PC-9 (cell line): ENCODE measurements at regions of chr19 and their contacts with region 1.

Region 1: DNA sequence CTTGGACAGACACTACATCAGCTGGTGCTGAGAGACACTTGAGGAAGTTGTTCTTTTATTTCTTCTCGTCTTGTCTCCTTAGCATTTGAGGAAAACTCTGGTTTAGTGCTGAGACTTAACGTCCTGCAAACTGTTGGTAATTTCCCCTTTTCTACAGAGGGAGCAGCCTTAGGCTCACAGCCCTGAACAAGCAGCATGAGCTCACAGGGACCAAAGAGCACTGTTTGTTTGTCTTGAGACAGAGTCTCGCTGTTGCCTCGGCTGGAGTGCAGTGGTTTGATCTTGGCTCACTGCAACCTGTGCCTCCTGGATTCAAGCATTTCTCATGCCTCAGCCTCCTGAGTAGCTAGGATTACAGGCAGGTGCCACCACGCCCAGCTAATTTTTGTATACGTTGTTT is 5.5 kb downstream of the ZNF805 start:
- DNase-seq: peak in 1 of 2 experiments; percentile 15
- H3K4me3 ChIP-seq: no peak overlapping the region
- H3K27ac ChIP-seq: no peak overlapping the region
- H3K4me1 ChIP-seq: peaks cover 12% of the 10 kb centered on the region; the same call in 1 of the 2 replicates
- H3K27me3 ChIP-seq: no peaks in the 10 kb centered on the region
- CTCF ChIP-seq: no peak

Region 2: GRCh38 chr19:57152921-57153320 is 93.0 kb before region 1 on chr19:
- CTCF ChIA-PET with region 1: no interaction called
- POLR2A ChIA-PET with region 1: no interaction called
- intact Hi-C with region 1: no loop called
- DNase-seq: peak in 1 of 2 experiments; percentile 51
- H3K4me3 ChIP-seq: no peak overlapping the region
- H3K27ac ChIP-seq: no peak overlapping the region
- H3K4me1 ChIP-seq: no peaks in the 10 kb centered on the region
- H3K27me3 ChIP-seq: peaks cover 69% of the 10 kb centered on the region
- CTCF ChIP-seq: no peak

Region 3: GRCh38 chr19:57376151-57376550 is 130.2 kb after region 1 on chr19:
- CTCF ChIA-PET with region 1: no interaction called
- POLR2A ChIA-PET with region 1: interaction called, 42 read pairs
- intact Hi-C with region 1: no loop called
- DNase-seq: no peak
- H3K4me3 ChIP-seq: no peak overlapping the region
- H3K27ac ChIP-seq: no peak overlapping the region
- H3K4me1 ChIP-seq: no peaks in the 10 kb centered on the region
- H3K27me3 ChIP-seq: no peaks in the 10 kb centered on the region
- CTCF ChIP-seq: no peak